Mucosa of descending colon (tissue), 3 donors: ENCODE measurements at regions of chr1 and their contacts with region 1.

Region 1: DNA sequence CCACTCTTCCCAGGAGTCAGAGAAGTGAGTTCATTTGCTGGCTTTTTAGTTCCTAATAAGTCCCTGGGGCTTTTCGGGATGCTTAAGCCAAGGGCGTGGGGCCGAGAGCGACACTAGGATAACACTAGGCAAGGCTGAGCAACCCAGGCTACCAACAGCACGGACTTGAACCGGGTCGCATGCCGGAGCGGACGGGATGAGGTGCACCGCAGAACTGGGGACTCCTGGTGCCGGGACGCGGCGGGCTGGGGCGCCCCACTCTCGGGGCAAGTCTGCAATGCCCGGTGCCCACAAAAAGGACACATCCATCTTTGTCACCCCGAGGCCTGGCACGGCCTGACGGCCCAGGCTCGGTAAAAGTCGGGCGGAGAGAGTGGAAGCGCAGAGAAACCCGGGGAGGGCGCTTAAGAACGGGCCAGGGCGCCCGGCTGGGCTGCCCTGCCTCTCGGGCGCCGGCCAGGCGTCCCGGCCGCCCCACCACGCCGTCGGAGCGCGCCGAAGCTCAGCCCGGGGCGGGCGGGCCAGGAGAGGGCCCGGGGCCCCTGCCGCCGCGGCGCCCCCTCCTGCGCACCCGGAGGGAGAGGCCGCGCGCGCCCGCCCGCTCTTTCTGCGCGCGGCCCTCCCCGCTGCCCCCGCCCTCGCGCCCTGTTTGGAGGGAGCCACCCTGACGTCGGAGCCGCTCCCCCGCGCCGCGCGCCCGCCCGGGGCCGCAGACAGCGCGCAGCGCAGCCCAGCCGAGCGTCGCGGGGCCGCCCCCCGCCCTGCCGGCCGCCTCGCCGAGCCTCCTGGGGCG is at the start of gene NBL1:
- DNase-seq: peak; percentile 85 to 89 (median 88)
- ATAC-seq: peak; percentile 50
- H3K4me3 ChIP-seq: peak within 1 kb of the TSS; percentile 86
- H3K4me1 ChIP-seq: peaks cover 48% of the 10 kb centered on the region
- CTCF ChIP-seq: no peak
- total RNA-seq, gene NBL1: 320 to 457 (median 426) TPM

Region 2: GRCh38 chr1:19596714-19597495 is 46.9 kb before region 1 on chr1:
- intact Hi-C with region 1: loop called in 1 of 2 experiments (anchors 10 kb)
- DNase-seq: peak; percentile 96 to 98 (median 98)
- ATAC-seq: peak; percentile 90
- H3K4me3 ChIP-seq: peak overlapping the region; percentile 96
- H3K4me1 ChIP-seq: peaks cover 20% of the 10 kb centered on the region
- CTCF ChIP-seq: no peak

Region 3: GRCh38 chr1:20058531-20058930 is 414.7 kb after region 1 on chr1:
- intact Hi-C with region 1: no loop called
- DNase-seq: peak in 1 of 3 donors; percentile 13
- ATAC-seq: peak; percentile 65
- H3K4me3 ChIP-seq: no peak overlapping the region
- H3K4me1 ChIP-seq: no peaks in the 10 kb centered on the region
- CTCF ChIP-seq: no peak